ENCODE measurements at regions of chr10 and their contacts with region 1.

Region 1: GRCh38 chr10:98414932-98415730 is at the start of gene PYROXD2:
- DNase-seq: peak; percentile 83 to 86
- H3K4me3 ChIP-seq: peak within 1 kb of the TSS; percentile 58 to 81 (median 64)
- H3K27ac ChIP-seq: peak within 1 kb of the TSS; percentile 82 to 83
- H3K4me1 ChIP-seq: peaks cover 5 to 15% of the 10 kb centered on the region in 2 donors
- H3K27me3 ChIP-seq: no peaks in the 10 kb centered on the region
- CTCF ChIP-seq: no peak
- POLR2A ChIP-seq: no peak
- total RNA-seq, gene PYROXD2: 13.2 to 20.0 (median 17.4) TPM

Region 2: GRCh38 chr10:98195120-98195519 is 220.0 kb before region 1 on chr10:
- intact Hi-C with region 1: loop called (anchors 5 kb)
- DNase-seq: no peak
- H3K4me3 ChIP-seq: no peak overlapping the region
- H3K27ac ChIP-seq: no peak overlapping the region
- H3K4me1 ChIP-seq: no peaks in the 10 kb centered on the region
- H3K27me3 ChIP-seq: no peaks in the 10 kb centered on the region
- CTCF ChIP-seq: no peak
- POLR2A ChIP-seq: no peak

Region 3: DNA sequence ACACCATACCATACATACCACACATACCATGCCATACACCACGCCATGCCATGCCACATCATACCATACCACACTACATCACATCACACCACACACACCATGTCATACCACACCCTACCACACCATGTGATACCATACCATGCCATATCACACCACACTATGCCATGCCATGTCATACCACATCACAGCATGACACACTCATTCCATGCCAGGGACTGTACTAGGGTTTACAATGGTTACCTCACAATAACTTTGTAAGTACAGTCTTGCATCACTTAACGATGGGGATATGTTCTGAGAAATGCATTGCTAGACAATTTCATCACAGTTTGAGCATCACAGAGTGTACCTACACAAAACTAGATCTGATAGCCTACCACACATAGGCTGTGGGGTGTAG is 14.6 kb before region 1 on chr10:
- intact Hi-C with region 1: no loop called
- DNase-seq: no peak
- H3K4me3 ChIP-seq: no peak overlapping the region
- H3K27ac ChIP-seq: no peak overlapping the region
- H3K4me1 ChIP-seq: no peaks in the 10 kb centered on the region
- H3K27me3 ChIP-seq: no peaks in the 10 kb centered on the region
- CTCF ChIP-seq: no peak
- POLR2A ChIP-seq: no peak

Measured in breast epithelium (tissue), 4 donors.